Panc1 (cell line): ENCODE measurements at regions of chr16 and their contacts with region 1.

Region 1: GRCh38 chr16:10601444-10602401 is 21.3 kb upstream of the EMP2 start:
- DNase-seq: no peak
- ATAC-seq: no peak; the same call in 1 of the 2 replicates
- H3K4me3 ChIP-seq: no peak overlapping the region
- H3K27ac ChIP-seq: no peak overlapping the region
- H3K4me1 ChIP-seq: no peaks in the 10 kb centered on the region
- H3K27me3 ChIP-seq: 0 out of 2 replicates have a peak, but pooled peaks cover 3% of the 10 kb centered on the region
- CTCF ChIP-seq: no peak

Region 2: GRCh38 chr16:12381662-12382061 is 1779.9 kb after region 1 on chr16:
- CTCF ChIA-PET with region 1: no interaction called
- POLR2A ChIA-PET with region 1: interaction called, 10 read pairs
- in situ Hi-C with region 1: no loop called
- intact Hi-C with region 1: no loop called
- DNase-seq: no peak
- ATAC-seq: no peak
- H3K4me3 ChIP-seq: no peak overlapping the region
- H3K27ac ChIP-seq: no peak overlapping the region
- H3K4me1 ChIP-seq: no peaks in the 10 kb centered on the region
- H3K27me3 ChIP-seq: no peaks in the 10 kb centered on the region
- CTCF ChIP-seq: no peak